ENCODE measurements at regions of chr20 and their contacts with region 1.

Region 1: GRCh38 chr20:59495894-59496510 is 108.3 kb upstream of the PHACTR3 start:
- DNase-seq: peak; percentile 78
- ATAC-seq: peak; percentile 76
- H3K4me3 Mint-ChIP-seq: no peak overlapping the region
- H3K27ac Mint-ChIP-seq: no peak overlapping the region
- H3K4me1 Mint-ChIP-seq: no peaks in the 10 kb centered on the region
- H3K27me3 Mint-ChIP-seq: peaks cover 13% of the 10 kb centered on the region

Region 2: GRCh38 chr20:59441860-59442845 is 53.8 kb before region 1 on chr20:
- CTCF ChIA-PET with region 1: no interaction called
- POLR2A ChIA-PET with region 1: no interaction called
- DNase-seq: peak; percentile 32
- ATAC-seq: no peak
- H3K4me3 Mint-ChIP-seq: no peak overlapping the region
- H3K27ac Mint-ChIP-seq: no peak overlapping the region
- H3K4me1 Mint-ChIP-seq: peaks cover 7% of the 10 kb centered on the region
- H3K27me3 Mint-ChIP-seq: peaks cover 46% of the 10 kb centered on the region

Region 3: DNA sequence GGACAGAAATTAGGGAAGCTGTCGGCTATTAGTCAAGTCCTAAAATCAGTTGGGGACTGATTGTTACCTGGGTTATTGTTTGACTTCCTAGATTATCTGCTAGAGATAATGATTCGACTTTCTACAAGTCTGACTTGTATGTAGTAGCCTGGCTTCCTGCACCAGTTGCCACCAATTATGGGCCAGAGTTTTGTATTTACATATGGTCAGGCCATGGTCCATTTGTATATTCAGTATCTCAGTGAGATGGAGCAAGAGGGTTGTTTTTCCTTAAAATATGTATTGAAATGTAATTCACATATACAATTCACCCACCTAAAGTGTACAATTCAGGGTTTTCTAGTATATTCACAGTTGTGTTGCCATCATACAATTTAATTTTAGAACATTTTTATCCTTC is 22.3 kb before region 1 on chr20:
- CTCF ChIA-PET with region 1: interaction called, 15 read pairs
- POLR2A ChIA-PET with region 1: no interaction called
- DNase-seq: no peak
- ATAC-seq: no peak
- H3K4me3 Mint-ChIP-seq: no peak overlapping the region
- H3K27ac Mint-ChIP-seq: no peak overlapping the region
- H3K4me1 Mint-ChIP-seq: no peaks in the 10 kb centered on the region
- H3K27me3 Mint-ChIP-seq: peaks cover 27% of the 10 kb centered on the region

Region 4: DNA sequence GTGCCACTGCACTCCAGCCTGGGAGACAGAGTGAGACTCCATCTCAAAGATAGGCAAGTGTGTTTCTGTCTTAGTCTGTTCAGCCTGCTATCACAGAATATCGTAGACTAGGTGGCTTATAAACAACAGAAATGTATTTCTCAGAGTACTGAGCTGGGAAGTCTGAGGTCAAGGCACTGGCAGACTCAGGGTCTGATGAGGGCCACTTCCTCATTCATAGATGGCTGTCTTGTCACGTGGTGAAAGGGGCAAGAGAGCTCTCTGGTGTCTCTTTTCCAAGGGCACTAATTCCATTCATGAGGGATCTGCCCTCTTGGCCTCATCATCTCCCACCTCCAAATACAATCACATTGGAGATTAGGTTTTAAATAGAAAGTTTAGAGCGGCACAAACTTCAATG is 12.7 kb after region 1 on chr20:
- CTCF ChIA-PET with region 1: interaction called, 11 read pairs
- POLR2A ChIA-PET with region 1: no interaction called
- DNase-seq: no peak
- ATAC-seq: no peak
- H3K4me3 Mint-ChIP-seq: no peak overlapping the region
- H3K27ac Mint-ChIP-seq: no peak overlapping the region
- H3K4me1 Mint-ChIP-seq: no peaks in the 10 kb centered on the region
- H3K27me3 Mint-ChIP-seq: peaks cover 20% of the 10 kb centered on the region

Region 5: DNA sequence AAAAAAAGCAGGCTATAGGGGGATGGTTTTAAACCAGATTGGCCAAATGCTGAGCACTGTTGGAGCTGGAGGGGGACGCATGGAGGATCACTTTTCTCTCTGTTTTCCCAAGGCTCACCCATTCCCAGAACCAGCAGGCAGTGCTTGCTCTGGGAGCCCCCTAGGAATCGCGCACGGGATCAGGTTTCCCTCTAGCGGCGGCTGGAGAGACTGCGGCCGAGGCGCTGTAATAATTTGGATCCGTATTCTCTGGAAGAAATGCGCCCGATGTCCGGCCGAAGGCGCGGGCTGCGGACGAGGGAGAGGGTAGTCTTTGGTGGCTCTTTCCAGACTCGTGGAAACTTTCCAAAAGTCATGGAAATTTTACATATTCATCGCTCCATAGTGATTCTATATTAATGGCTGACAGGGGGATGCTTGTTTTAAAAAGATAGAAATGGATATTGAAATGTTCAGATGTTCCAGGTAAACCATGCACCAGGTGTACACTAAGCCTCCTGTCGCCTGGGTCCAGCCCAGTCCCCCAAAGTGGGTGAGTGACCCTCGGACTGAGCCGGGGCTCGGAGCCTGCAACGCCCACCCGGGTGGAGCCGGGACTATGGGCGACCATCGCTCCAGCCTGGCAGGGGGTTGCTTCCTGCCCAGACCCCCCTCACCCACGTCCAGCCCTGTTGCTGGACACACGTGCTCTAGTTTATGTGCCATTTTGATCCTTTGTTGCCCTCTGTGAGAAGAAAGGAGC is 29.7 kb after region 1 on chr20:
- CTCF ChIA-PET with region 1: interaction called, 10 read pairs
- POLR2A ChIA-PET with region 1: no interaction called
- DNase-seq: peak; percentile 44
- ATAC-seq: no peak
- H3K4me3 Mint-ChIP-seq: no peak overlapping the region
- H3K27ac Mint-ChIP-seq: no peak overlapping the region
- H3K4me1 Mint-ChIP-seq: no peaks in the 10 kb centered on the region
- H3K27me3 Mint-ChIP-seq: peaks cover 48% of the 10 kb centered on the region

Region 6: GRCh38 chr20:59632456-59633113 is 136.6 kb after region 1 on chr20:
- CTCF ChIA-PET with region 1: no interaction called
- POLR2A ChIA-PET with region 1: no interaction called
- DNase-seq: no peak
- ATAC-seq: no peak
- H3K4me3 Mint-ChIP-seq: no peak overlapping the region
- H3K27ac Mint-ChIP-seq: no peak overlapping the region
- H3K4me1 Mint-ChIP-seq: no peaks in the 10 kb centered on the region
- H3K27me3 Mint-ChIP-seq: peaks cover 4% of the 10 kb centered on the region

Measured in activated CD8-positive, alpha-beta T cell treated with anti-CD3 and anti-CD28 coated beads, Interleukin-2, amount 10 ng/mL, durations not matched to agents 7 days and 5 days (primary cell).